ENCODE measurements at regions of chr15 and their contacts with region 1.

Region 1: DNA sequence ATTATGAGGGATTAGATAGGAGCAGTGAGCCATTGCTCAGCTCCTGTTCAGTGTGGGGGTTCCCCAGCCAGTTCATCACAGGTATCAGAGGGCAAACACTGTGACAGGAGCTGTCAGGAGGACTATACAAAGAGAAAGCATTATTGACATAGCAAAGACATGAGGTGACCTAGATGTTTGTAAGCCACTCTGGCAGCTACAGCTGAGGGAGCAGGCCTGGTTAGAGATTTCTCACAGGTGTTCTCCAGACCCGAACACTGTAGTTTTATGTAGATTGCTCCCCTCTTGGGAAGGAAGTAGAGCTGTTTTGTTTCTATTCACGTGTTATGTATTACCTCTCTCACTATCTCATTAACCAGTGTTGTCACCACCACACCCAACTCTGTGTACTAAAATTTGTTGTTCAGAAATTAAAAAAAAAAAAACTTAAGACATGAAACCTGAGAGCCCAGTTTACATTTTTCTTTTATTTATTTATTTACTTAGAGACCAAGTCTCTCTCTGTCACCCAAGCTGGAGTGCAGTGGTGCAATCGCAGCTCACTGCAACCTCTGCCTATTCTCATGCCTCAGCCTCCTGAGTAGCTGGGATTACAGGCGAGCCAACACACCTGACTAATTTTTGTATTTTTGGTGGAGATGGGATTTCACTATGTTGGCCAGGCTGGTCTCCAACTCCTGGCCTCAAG is 123.7 kb downstream of the RBPMS2 start:
- DNase-seq: peak; percentile 53 to 75 (median 64)
- H3K4me3 ChIP-seq: no peak overlapping the region
- H3K4me3 Mint-ChIP-seq: peak overlapping the region in 7 of 8 donors; percentile 57 to 89 (median 75)
- H3K27ac ChIP-seq: peak overlapping the region; percentile 44
- H3K27ac Mint-ChIP-seq: peak overlapping the region; percentile 77 to 94 (median 93)
- H3K4me1 ChIP-seq: peaks cover 50% of the 10 kb centered on the region
- H3K4me1 Mint-ChIP-seq: peaks cover 27 to 46% (median 39%) of the 10 kb centered on the region in 4 donors
- H3K27me3 ChIP-seq: no peaks in the 10 kb centered on the region
- H3K27me3 Mint-ChIP-seq: no peaks in the 10 kb centered on the region

Region 2: DNA sequence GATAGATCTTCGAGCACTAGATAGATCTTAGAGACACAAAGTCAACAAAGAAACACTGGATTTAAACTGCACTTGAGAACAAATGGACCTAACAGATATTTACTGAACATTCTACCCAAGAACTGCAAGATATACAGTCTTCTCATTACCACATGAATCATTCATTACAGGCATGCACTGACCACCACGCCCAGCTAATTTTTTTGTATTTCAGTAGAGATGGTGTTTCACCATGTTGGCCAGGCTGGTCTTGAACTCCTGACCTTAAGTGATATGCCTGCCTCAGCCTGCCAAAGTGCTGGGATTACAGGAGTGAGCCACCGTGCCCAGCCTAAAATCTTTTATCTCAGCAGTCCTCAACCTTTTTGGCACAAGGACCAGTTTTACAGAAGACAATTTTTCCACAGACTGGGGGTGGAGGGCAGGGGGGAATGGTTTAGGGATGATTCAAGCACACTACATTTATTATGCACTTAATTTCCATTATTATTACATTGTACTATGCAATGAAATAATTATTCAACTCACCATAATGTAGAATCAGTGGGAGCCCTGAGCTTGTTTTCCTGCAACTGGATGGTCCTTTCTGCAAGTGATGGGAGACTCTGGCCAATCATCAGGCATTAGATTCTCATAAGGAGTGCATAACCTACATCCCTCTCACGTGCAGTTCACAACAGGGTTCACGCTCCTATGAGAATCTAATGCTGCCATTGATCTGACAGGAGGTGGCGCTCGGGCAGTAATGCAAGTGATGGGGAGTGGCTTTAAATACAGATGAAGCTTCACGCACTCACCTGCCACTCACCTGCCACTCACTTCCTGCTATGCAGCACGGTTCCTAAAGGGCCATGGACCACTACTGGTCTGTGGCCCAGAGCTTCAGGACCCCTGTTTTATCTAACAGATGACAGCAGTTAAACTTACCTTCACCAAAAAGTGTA is 317.5 kb before region 1 on chr15:
- CTCF ChIA-PET with region 1: interaction called, 8 read pairs
- POLR2A ChIA-PET with region 1: interaction called, 3 read pairs
- intact Hi-C with region 1: loop called (anchors 5 kb)
- DNase-seq: peak; percentile 36 to 70 (median 54)
- H3K4me3 ChIP-seq: no peak overlapping the region
- H3K4me3 Mint-ChIP-seq: peak overlapping the region in 2 of 8 donors; percentile 47 to 62
- H3K27ac ChIP-seq: no peak overlapping the region
- H3K27ac Mint-ChIP-seq: peak overlapping the region; percentile 69 to 92 (median 75)
- H3K4me1 ChIP-seq: peaks cover 32% of the 10 kb centered on the region
- H3K4me1 Mint-ChIP-seq: peaks cover 18 to 32% (median 21%) of the 10 kb centered on the region in 4 donors
- H3K27me3 ChIP-seq: no peaks in the 10 kb centered on the region
- H3K27me3 Mint-ChIP-seq: no peaks in the 10 kb centered on the region

Region 3: GRCh38 chr15:64430000-64430735 is 221.5 kb before region 1 on chr15:
- CTCF ChIA-PET with region 1: interaction called, 105 read pairs
- POLR2A ChIA-PET with region 1: interaction called, 19 read pairs
- intact Hi-C with region 1: loop called (anchors 1 kb)
- DNase-seq: peak; percentile 75 to 85 (median 79)
- H3K4me3 ChIP-seq: peak overlapping the region; percentile 18 to 25
- H3K4me3 Mint-ChIP-seq: peak overlapping the region; percentile 56 to 79 (median 76)
- H3K27ac ChIP-seq: peak overlapping the region; percentile 44
- H3K27ac Mint-ChIP-seq: peak overlapping the region; percentile 87 to 97 (median 91)
- H3K4me1 ChIP-seq: peaks cover 47% of the 10 kb centered on the region
- H3K4me1 Mint-ChIP-seq: peaks cover 31 to 49% (median 45%) of the 10 kb centered on the region in 4 donors
- H3K27me3 ChIP-seq: no peaks in the 10 kb centered on the region
- H3K27me3 Mint-ChIP-seq: no peaks in the 10 kb centered on the region

Region 4: DNA sequence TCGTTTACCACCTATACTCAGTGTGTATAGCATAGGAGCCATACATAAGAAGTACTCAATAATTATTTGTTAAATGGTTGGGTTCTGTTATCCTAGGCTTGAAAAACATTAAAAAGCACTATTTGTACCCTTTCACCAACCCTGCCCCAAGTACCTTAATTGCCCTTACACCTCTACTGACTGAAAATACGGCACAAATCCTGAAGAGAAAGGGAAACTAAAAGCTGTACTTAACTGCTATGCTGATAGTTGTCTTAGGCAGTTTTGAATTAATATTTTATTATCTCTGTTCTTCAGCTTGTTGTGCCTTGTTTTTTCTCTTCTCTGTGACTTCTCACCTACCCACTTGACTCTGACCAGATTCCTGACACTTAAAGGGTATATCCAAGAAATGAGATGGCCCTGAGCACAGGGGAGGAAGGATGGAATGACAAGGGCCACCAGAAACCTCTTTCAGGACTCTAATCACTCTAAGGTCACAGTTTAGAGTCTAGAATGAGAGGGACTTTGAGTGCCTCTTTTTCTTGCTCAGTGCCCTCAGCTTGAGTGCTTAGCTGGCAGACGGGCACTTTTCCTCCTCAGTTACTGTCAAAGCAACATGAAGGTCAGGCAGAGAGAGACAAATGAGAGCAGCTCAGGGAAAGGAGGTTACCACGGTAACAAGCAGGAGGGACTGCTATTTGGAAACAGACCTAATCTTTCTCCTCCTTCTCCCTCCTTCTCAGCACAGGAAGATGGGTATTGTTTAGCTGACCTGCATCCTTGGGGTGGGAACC is 54.8 kb before region 1 on chr15:
- CTCF ChIA-PET with region 1: interaction called, 7 read pairs
- POLR2A ChIA-PET with region 1: interaction called, 4 read pairs
- intact Hi-C with region 1: loop called (anchors 5 kb)
- DNase-seq: peak; percentile 50 to 62 (median 52)
- H3K4me3 ChIP-seq: peak overlapping the region; percentile 11 to 33
- H3K4me3 Mint-ChIP-seq: peak overlapping the region; percentile 81 to 92 (median 88)
- H3K27ac ChIP-seq: peak overlapping the region; percentile 64
- H3K27ac Mint-ChIP-seq: peak overlapping the region; percentile 89 to 98 (median 94)
- H3K4me1 ChIP-seq: peaks cover 60% of the 10 kb centered on the region
- H3K4me1 Mint-ChIP-seq: peaks cover 44 to 65% (median 55%) of the 10 kb centered on the region in 4 donors
- H3K27me3 ChIP-seq: no peaks in the 10 kb centered on the region
- H3K27me3 Mint-ChIP-seq: no peaks in the 10 kb centered on the region

Region 5: GRCh38 chr15:64634576-64635498 is 16.9 kb before region 1 on chr15:
- CTCF ChIA-PET with region 1: interaction called, 14 read pairs
- POLR2A ChIA-PET with region 1: interaction called, 24 read pairs
- intact Hi-C with region 1: loop called (anchors 2 kb)
- DNase-seq: peak in 4 of 5 donors; percentile 13 to 61 (median 25)
- H3K4me3 ChIP-seq: peak overlapping the region in 1 of 2 donors; percentile 6
- H3K4me3 Mint-ChIP-seq: peak overlapping the region; percentile 52 to 86 (median 76)
- H3K27ac ChIP-seq: peak overlapping the region; percentile 56
- H3K27ac Mint-ChIP-seq: peak overlapping the region; percentile 87 to 94 (median 88)
- H3K4me1 ChIP-seq: peaks cover 73% of the 10 kb centered on the region
- H3K4me1 Mint-ChIP-seq: peaks cover 40 to 75% (median 55%) of the 10 kb centered on the region in 4 donors
- H3K27me3 ChIP-seq: no peaks in the 10 kb centered on the region
- H3K27me3 Mint-ChIP-seq: no peaks in the 10 kb centered on the region

Measured in CD4-positive, alpha-beta memory T cell (primary cell).